ENCODE measurements at regions of chr5 and their contacts with region 1.

Region 1: GRCh38 chr5:102583276-102584124 is 84.7 kb upstream of the SLCO6A1 start:
- DNase-seq: no peak
- H3K4me3 ChIP-seq: no peak overlapping the region
- H3K27ac ChIP-seq: no peak overlapping the region
- H3K4me1 ChIP-seq: peaks cover 0 to 4% (median 0%) of the 10 kb centered on the region in 6 donors
- H3K27me3 ChIP-seq: no peaks in the 10 kb centered on the region
- CTCF ChIP-seq: peak in 8 of 11 experiments; percentile 6 to 45 (median 35)
- POLR2A ChIP-seq: no peak

Region 2: DNA sequence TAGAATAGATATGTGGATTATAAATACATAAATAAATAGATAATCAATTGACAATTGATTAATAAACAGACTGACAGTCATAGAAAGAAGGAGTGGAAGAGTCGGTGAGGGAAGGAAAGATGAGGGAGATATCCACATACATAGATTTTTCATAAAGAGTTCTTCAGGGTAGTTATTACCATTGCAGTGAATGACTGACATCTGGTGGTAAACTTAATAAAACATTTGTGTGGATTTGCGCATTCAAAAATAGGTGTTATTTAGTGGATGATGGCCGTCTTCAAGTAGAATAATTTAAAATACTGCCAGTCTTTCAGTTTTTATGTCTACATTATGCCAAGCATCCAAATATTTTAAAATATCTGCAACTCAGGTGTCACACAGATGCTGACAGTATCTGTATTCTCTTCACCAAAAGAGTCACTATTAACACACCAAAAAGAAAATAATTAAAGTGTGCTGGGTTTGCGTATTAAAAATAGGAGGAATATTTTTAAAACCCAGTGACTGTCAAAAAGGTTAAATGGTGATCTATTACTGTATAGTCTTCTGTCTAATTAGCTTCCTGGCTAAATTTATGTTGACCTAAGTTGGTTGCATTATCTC is 457.7 kb after region 1 on chr5:
- intact Hi-C with region 1: loop called (anchors 10 kb)
- DNase-seq: no peak
- H3K4me3 ChIP-seq: no peak overlapping the region
- H3K27ac ChIP-seq: no peak overlapping the region
- H3K4me1 ChIP-seq: no peaks in the 10 kb centered on the region
- H3K27me3 ChIP-seq: no peaks in the 10 kb centered on the region
- CTCF ChIP-seq: peak in 7 of 11 experiments; percentile 11 to 38 (median 32)
- POLR2A ChIP-seq: no peak

Region 3: DNA sequence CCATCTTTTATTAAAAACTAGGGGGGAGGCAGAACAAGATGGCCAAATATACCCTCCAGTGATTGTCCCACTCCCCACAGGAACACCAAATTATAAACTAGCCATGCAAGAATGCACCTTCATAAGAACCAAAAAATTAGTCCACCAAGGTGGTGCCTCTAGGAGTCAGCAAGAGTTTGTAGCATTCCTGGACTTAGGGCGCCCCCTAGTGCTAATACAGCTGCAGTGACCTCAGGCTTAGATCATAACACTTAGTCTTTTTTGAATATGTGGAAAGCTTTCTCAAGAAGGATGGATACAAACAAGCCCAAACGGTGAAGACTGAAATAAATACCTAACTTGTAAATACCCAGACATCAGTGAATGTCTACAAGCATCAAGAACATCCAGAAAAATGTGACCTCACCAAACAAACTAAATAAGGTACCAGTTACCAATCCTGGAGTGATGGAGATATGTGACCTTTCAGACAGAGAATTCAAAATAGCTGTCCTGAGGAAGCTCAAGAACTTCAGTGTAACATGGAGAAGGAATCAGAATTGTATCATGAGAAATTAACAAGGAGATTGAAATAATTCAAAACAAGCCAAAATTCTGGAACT is 555.9 kb after region 1 on chr5:
- intact Hi-C with region 1: loop called (anchors 10 kb)
- DNase-seq: peak; percentile 87
- H3K4me3 ChIP-seq: no peak overlapping the region
- H3K27ac ChIP-seq: no peak overlapping the region
- H3K4me1 ChIP-seq: peaks cover 0 to 4% (median 0%) of the 10 kb centered on the region in 6 donors
- H3K27me3 ChIP-seq: no peaks in the 10 kb centered on the region
- CTCF ChIP-seq: peak; percentile 79 to 93 (median 89)
- POLR2A ChIP-seq: no peak